PC-3 (cell line): ENCODE measurements at regions of chr5 and their contacts with region 1.

Region 1: GRCh38 chr5:32057162-32058096 is 116.7 kb downstream of the GOLPH3 start:
- DNase-seq: peak; percentile 79
- ATAC-seq: peak; percentile 36; the same call in 1 of the 2 replicates
- H3K4me3 ChIP-seq: no peak overlapping the region
- H3K27ac ChIP-seq: peak overlapping the region; percentile 72
- H3K4me1 ChIP-seq: peaks cover 55% of the 10 kb centered on the region
- H3K27me3 ChIP-seq: no peaks in the 10 kb centered on the region
- CTCF ChIP-seq: peak; percentile 58

Region 2: DNA sequence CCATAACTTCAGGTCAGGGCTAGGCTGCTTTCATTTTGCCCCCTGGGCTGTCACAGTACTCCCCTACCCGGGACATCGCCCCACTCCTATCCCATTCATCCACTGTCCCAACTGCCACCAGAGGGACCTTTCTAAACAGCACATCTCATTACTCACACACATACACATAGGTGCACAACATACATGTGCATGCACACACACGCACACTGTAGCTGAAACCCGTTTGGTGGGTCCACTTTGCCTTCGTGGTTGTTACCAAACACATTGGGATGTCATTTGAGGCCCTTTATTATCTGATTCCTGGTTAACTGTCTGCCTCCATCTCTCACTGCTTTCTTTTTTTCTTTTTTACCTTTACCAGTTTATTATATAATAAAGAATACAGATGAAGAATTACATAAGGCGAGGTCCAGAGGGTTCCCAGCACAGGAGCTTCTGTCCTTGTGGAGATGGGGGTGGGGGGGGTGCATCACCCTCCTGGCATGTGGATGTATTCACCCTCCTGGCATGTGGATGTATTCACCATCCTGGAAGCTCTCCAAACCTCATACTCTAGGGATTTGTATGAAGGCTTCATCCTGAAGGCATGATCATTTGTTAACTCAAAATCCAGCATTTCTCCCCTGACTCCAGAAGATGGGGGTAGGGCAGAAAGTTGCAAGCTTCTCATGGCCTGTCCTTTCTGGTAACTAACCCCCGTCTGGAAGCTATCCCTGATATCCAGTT is 69.3 kb before region 1 on chr5:
- CTCF ChIA-PET with region 1: no interaction called
- POLR2A ChIA-PET with region 1: interaction called, 3 read pairs
- intact Hi-C with region 1: loop called (anchors 5 kb)
- DNase-seq: peak; percentile 99
- ATAC-seq: peak; percentile 84
- H3K4me3 ChIP-seq: no peak overlapping the region
- H3K27ac ChIP-seq: peak overlapping the region; percentile 46
- H3K4me1 ChIP-seq: peaks cover 45% of the 10 kb centered on the region
- H3K27me3 ChIP-seq: no peaks in the 10 kb centered on the region
- CTCF ChIP-seq: no peak